Left cardiac atrium (tissue), 4 donors: ENCODE measurements at regions of chr18 and their contacts with region 1.

Region 1: DNA sequence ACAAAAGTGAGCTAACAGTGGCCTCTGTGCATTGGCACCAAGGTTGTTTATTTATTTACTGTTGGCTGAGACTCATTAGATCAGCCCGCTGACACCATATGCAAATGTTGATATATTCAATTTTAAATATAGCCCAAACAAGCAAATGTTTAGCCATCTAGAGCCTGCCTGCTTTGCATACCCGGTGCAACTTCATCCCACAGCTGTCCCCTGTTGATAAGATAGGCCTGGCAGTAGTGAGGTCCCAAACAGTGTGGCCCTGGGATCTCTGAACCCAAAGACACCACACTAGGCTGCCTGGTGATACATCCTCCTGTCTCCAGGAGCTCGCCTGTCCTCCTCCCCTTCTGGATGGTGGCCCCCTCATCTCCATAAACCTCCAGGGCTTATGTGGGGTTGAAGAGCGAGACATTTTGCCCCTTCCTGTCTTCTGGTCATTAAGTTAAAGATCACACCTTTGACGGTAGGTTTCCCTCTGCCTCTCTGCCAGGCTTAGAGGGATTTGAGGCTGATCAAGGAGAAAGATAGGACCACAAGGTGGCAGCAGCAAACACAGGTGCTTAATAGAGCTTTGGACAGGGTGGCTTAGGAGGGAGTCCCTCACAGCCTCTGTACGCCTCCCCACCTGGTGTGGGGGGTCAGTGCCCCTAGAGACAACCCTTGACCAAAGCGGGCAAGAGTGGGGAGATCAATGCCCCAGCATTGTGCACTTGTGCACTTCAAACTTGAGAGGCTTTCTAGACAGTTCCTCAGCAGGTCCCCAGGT is 23.7 kb upstream of the MYO5B start:
- DNase-seq: no peak
- ATAC-seq: peak in 1 of 2 donors; percentile 61

Region 2: DNA sequence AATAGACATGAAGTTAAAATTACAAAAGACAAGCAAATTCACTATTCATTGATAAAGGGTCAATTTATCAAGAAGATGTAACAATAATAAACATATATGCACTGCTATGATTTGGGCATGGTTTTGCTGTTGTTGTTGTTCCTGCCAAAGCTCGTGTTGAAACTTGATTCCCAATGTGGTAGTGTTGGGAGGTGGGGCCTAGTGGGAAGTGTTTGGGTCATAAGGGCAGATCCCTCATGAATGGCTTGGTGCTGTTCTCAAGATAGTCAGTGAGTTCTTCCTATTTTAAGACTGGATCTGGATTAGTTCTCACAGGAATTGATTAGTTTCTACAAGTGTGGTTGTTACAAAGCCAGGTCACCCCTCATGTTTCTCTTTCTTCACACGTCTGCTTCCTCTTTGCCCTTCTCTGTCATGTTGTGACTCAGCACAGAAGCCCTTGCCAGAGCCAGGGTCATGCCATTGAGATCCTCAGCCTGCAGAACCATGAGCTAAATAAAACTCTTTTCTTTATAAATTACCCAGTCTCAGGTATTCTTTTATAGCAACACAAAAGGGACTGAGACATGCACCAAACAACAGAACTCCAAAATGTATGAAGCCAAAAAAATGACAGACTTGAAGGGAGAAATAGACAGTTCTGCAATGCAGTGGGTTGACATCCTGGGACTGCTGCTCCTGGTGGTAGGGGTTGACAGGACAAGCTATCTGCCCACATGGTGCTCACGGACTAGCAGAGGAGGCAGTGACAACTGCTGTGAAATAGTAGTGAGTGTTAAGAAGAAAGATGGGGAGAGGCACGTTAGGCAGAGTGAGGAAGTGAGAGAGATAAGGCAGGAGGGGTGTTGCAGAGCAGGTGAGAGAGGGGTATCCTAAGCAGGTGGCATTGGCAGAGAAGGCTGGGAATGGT is 137.7 kb after region 1 on chr18:
- intact Hi-C with region 1: loop called (anchors 5 to 10 kb)
- DNase-seq: no peak
- ATAC-seq: peak; percentile 27 to 63

Region 3: GRCh38 chr18:50429207-50429948 is 210.8 kb after region 1 on chr18:
- intact Hi-C with region 1: loop called (anchors 5 to 10 kb)
- DNase-seq: no peak
- ATAC-seq: no peak